H1 (cell line): ENCODE measurements at regions of chr21 and their contacts with region 1.

Region 1: GRCh38 chr21:44279354-44280260 is 6.1 kb upstream of the AIRE start:
- DNase-seq: no peak
- H3K4me3 ChIP-seq: no peak overlapping the region
- H3K27ac ChIP-seq: no peak overlapping the region
- H3K4me1 ChIP-seq: peaks cover 0 to 17% (median 9%) of the 10 kb centered on the region in 4 experiments; a peak in 6 of 7 replicates
- H3K27me3 ChIP-seq: peaks cover 0 to 6% (median 2%) of the 10 kb centered on the region in 4 experiments; a peak in 4 of 7 replicates
- CTCF ChIP-seq: no peak
- EP300 ChIP-seq: no peak
- POLR2A ChIP-seq: no peak
- RAD21 ChIP-seq: no peak

Region 2: GRCh38 chr21:44267655-44268142 is 11.9 kb before region 1 on chr21:
- CTCF ChIA-PET with region 1: interaction called, 11 read pairs
- POLR2A ChIA-PET with region 1: interaction called, 3 read pairs
- DNase-seq: peak in 1 of 2 experiments; percentile 66
- H3K4me3 ChIP-seq: no peak overlapping the region
- H3K27ac ChIP-seq: no peak overlapping the region
- H3K4me1 ChIP-seq: peaks cover 0 to 7% (median 4%) of the 10 kb centered on the region in 4 experiments; a peak in 6 of 7 replicates
- H3K27me3 ChIP-seq: no peaks in the 10 kb centered on the region
- CTCF ChIP-seq: peak; percentile 49 to 66 (median 50)
- EP300 ChIP-seq: no peak
- POLR2A ChIP-seq: no peak
- RAD21 ChIP-seq: peak; percentile 56 to 64

Region 3: DNA sequence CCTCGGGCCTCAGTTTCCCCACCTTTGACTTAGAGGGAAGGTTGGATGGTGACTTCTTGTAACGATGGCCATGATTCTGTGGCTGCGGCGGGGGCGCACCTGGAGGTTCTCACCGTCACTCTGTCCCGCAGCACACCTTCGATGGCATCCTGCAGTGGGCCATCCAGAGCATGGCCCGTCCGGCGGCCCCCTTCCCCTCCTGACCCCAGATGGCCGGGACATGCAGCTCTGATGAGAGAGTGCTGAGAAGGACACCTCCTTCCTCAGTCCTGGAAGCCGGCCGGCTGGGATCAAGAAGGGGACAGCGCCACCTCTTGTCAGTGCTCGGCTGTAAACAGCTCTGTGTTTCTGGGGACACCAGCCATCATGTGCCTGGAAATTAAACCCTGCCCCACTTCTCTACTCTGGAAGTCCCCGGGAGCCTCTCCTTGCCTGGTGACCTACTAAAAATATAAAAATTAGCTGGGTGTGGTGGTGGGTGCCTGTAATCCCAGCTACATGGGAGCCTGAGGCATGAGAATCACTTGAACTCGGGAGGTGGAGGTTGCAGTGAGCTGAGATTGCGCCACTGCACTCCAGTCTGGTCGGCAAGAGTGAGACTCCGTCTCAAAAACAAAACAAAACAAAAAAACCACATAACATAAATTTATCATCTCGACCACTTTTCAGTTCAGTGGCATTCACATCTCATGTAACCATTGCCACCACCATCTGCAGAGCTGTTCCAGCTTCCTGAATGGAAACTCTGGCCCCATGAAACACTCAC is 18.1 kb after region 1 on chr21:
- CTCF ChIA-PET with region 1: interaction called, 53 read pairs
- POLR2A ChIA-PET with region 1: interaction called, 3 read pairs
- DNase-seq: peak; percentile 49 to 87
- H3K4me3 ChIP-seq: no peak overlapping the region
- H3K27ac ChIP-seq: no peak overlapping the region
- H3K4me1 ChIP-seq: peaks cover 0 to 15% (median 5%) of the 10 kb centered on the region in 4 experiments; a peak in 5 of 7 replicates
- H3K27me3 ChIP-seq: peaks cover 0 to 3% (median 0%) of the 10 kb centered on the region in 4 experiments; a peak in 2 of 7 replicates
- CTCF ChIP-seq: peak in 2 of 3 experiments; percentile 88 to 91; a peak in 3 of 4 replicates
- EP300 ChIP-seq: no peak
- POLR2A ChIP-seq: no peak
- RAD21 ChIP-seq: peak; percentile 92 to 93